ENCODE measurements at regions of chr10 and their contacts with region 1.

Region 1: GRCh38 chr10:15879058-15879457 is 18.8 kb upstream of the MINDY3 start:
- DNase-seq: peak; percentile 47
- ATAC-seq: peak; percentile 31; the same call in 1 of the 2 replicates
- H3K4me3 ChIP-seq: no peak overlapping the region
- H3K27ac ChIP-seq: no peak overlapping the region
- H3K4me1 ChIP-seq: no peaks in the 10 kb centered on the region
- H3K27me3 ChIP-seq: no peaks in the 10 kb centered on the region
- CTCF ChIP-seq: peak; percentile 69

Region 2: GRCh38 chr10:15744217-15744865 is 134.7 kb before region 1 on chr10:
- CTCF ChIA-PET with region 1: no interaction called
- POLR2A ChIA-PET with region 1: no interaction called
- intact Hi-C with region 1: no loop called
- DNase-seq: peak; percentile 34
- ATAC-seq: no peak
- H3K4me3 ChIP-seq: no peak overlapping the region
- H3K27ac ChIP-seq: no peak overlapping the region
- H3K4me1 ChIP-seq: peaks cover 6% of the 10 kb centered on the region; the same call in 1 of the 2 replicates
- H3K27me3 ChIP-seq: no peaks in the 10 kb centered on the region
- CTCF ChIP-seq: peak; percentile 55

Region 3: DNA sequence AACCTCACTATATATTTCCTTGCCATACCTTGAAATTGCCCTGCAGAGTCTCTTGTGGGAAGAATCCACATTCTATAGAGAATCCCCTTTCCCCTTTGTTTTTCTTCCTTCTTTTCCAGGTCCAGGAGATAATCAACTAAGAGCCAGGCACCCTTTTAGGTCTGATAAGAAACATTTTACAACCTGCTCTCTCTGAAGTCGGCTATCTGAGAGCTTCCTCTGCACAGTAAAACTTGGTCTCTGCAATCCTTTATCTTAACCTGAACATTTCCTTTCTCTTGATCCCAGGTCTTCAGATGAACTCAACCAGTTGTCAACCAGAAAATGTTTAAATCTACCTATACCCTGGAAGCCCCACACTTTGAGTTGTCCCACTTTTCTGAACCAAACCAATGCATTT is 538.3 kb after region 1 on chr10:
- CTCF ChIA-PET with region 1: no interaction called
- POLR2A ChIA-PET with region 1: no interaction called
- intact Hi-C with region 1: no loop called
- DNase-seq: no peak
- ATAC-seq: no peak
- H3K4me3 ChIP-seq: no peak overlapping the region
- H3K27ac ChIP-seq: no peak overlapping the region
- H3K4me1 ChIP-seq: no peaks in the 10 kb centered on the region
- H3K27me3 ChIP-seq: no peaks in the 10 kb centered on the region; the same call in 1 of the 2 replicates
- CTCF ChIP-seq: no peak

Region 4: DNA sequence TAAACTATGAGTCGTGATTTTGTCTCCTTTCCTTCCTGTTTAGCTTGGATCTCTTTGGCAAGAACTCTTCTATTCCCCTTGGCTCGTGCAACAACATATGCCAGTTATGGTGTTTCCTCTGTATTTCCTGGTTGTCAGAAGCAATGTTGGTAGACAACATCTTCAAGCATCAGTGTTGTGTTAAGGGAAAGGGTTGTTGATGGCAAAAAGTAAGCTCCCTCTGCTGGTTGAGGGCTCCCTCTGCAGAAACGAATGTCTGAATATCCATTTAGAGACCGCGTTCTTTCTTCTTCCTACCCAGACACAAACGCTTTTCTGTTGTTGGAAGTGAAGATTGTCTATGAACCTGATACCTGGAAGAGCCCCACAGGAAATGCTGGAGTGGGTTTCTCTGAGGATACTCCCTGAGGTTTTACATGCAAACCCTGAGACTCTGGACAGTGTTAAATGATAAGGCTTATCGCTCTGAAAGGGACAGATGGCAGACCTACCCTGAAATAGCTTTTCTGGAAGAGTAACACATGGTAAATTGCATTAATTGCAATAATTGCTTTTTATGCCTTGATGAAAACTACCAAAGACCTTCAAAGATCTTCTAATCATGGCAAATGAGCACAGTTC is 666.2 kb after region 1 on chr10:
- CTCF ChIA-PET with region 1: no interaction called
- POLR2A ChIA-PET with region 1: interaction called, 10 read pairs
- intact Hi-C with region 1: loop called (anchors 1 kb)
- DNase-seq: peak; percentile 30
- ATAC-seq: no peak
- H3K4me3 ChIP-seq: no peak overlapping the region
- H3K27ac ChIP-seq: no peak overlapping the region
- H3K4me1 ChIP-seq: no peaks in the 10 kb centered on the region
- H3K27me3 ChIP-seq: no peaks in the 10 kb centered on the region
- CTCF ChIP-seq: peak; percentile 58

Region 5: DNA sequence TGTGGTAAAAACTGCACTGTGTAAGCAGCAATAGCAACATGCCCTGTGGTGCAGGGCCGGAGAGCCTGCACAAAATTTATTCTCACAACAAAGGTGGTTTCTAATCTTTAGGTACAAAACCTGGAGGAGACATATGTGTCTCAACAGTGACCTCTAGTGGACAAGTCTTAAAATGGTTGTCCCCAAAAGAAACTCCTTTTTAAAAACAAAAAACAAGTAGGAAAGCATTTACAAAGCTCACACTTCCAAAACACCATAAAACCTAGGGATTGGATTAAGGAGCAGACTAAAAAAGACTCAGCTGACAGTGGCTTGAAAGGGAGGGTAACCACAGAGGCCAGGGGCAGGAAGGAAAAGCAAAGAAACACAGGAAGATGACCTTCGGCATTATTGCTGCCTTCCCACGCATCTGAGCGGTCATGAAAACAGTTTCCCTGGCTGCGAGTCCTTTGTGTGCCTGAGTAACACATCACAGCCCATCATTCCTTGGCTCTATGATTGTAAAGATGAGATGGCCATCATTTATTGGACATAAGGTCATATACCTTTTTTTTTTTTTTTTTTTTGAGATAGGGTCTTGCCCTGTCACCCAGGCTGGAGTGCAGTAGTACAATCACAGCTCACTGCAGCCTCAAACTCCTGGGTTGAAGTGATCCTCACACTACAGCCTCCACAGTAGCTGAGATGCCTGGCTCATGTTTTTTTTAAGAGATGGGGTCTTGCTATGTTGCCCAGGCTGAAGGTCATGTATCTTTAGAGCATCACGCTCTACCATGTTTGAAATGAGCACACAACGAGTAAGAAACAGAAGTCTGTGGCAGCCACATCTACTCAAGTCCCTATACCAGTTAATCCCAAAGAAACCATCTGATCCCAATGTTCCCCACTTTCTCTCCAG is 898.7 kb after region 1 on chr10:
- CTCF ChIA-PET with region 1: no interaction called
- POLR2A ChIA-PET with region 1: no interaction called
- intact Hi-C with region 1: loop called (anchors 1 kb)
- DNase-seq: peak; percentile 47
- ATAC-seq: no peak
- H3K4me3 ChIP-seq: no peak overlapping the region
- H3K27ac ChIP-seq: no peak overlapping the region
- H3K4me1 ChIP-seq: no peaks in the 10 kb centered on the region
- H3K27me3 ChIP-seq: no peaks in the 10 kb centered on the region
- CTCF ChIP-seq: peak; percentile 67

Measured in PC-3 (cell line).